ENCODE measurements at regions of chr3 and their contacts with region 1.

Region 1: DNA sequence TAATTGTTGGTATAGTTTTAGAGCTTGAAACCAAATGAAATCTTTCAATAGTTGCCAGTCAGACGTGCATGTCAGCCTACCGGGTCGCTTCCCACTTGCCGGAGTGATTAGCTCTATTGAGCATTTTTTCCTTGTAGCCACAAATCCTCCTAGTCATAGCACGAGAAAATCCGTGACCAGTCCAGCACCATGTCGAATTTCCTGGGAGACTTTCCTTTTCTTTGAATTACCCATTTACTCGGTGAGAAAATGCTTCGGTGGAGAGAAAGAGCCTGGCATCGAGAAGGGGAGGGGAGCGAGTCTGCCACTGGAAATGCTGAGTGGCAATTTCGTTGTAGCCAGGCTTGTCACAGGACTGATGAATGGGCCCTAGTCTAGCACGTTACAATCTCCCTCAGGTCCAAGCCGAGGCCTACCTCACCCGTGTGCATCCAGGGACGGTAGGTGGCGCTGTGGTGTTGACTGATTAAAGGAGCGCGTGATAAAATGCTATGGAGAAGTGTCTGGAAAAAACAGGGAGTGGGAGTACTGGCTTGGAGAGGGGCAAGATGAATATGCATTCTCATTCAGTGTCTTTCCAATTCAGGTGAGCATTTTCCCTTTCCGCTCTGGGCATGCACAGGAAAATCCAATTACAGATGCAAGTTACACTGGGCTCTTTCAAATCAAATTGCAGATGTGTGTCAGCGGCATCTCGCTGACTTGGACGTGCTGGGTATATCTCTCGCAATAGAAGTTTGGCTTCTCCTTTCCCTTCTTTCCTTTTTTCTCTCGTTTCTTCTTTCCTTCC is 238.8 kb downstream of the EDEM1 start:
- DNase-seq: peak; percentile 86
- H3K4me3 Mint-ChIP-seq: no peak overlapping the region
- H3K27ac Mint-ChIP-seq: no peak overlapping the region
- H3K4me1 Mint-ChIP-seq: peaks cover 9% of the 10 kb centered on the region
- H3K27me3 Mint-ChIP-seq: no peaks in the 10 kb centered on the region
- CTCF ChIP-seq: peak; percentile 84

Region 2: GRCh38 chr3:5226783-5227182 is 199.5 kb before region 1 on chr3:
- CTCF ChIA-PET with region 1: no interaction called
- intact Hi-C with region 1: loop called (anchors 10 kb)
- DNase-seq: no peak
- H3K4me3 Mint-ChIP-seq: no peak overlapping the region
- H3K27ac Mint-ChIP-seq: no peak overlapping the region
- H3K4me1 Mint-ChIP-seq: no peaks in the 10 kb centered on the region
- H3K27me3 Mint-ChIP-seq: no peaks in the 10 kb centered on the region
- CTCF ChIP-seq: peak; percentile 27

Region 3: DNA sequence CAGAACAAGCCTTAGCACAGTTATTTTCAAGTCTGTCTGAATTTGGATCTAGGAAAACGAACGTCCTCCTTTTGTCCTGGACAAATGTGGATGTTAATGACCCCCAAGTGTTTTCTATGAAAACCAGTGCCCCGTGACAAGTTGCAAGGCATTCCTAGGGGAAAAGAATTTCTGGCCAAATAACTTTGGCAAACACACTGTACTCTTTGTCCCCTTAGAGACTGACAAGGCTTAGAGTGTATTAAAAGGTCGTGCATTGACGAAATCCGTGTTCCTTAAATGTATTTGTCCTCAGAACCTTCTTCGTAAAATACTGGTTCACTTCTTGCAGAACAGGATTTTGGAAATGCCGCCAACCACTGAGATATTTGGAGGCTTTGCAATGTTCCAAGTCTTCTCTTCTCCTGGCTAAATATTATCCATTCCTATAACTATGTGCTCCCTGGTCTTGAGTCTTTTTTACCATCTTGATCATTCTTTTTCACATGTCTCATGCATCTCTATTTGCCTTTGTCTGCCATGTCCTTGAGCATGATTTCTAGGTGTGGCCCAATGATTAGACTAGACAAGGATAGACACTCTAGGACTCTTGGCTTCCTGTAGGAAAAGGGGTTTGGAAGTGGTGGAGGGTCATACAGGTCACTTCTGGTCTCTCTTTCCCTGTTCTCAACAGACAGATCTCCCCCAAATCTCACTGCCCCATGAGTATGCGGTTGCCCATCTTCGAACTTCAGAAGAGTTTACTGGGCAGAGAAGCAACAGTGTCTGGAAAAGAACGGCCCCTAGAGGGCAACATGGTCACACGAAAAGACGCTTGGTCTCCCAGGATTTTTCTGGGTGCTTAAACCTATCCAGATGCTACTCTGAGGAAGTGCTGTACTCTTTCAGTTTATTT is 121.3 kb before region 1 on chr3:
- CTCF ChIA-PET with region 1: no interaction called
- intact Hi-C with region 1: loop called (anchors 1 kb)
- DNase-seq: peak; percentile 74
- H3K4me3 Mint-ChIP-seq: no peak overlapping the region
- H3K27ac Mint-ChIP-seq: no peak overlapping the region
- H3K4me1 Mint-ChIP-seq: peaks cover 31% of the 10 kb centered on the region
- H3K27me3 Mint-ChIP-seq: no peaks in the 10 kb centered on the region
- CTCF ChIP-seq: peak; percentile 50

Region 4: DNA sequence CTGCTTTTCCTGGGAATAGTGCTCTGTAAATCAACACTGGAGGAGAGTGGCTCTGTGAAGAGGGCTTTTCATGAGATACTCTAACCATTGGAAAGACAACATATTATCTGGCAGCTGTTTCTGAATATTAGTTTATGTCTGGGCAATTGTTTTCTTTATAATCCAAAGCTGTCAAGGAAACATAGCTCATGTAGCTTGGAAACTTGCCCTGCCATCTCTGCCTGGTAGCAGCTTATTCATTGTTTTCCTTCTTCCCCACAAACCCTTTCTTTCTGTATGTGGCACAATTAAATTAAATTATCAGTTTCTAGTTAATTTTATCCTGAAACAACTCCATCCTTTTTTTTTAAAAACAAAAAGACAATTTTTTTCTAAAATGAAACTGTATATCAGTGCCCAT is 78.8 kb before region 1 on chr3:
- CTCF ChIA-PET with region 1: no interaction called
- intact Hi-C with region 1: no loop called
- DNase-seq: no peak
- H3K4me3 Mint-ChIP-seq: no peak overlapping the region
- H3K27ac Mint-ChIP-seq: no peak overlapping the region
- H3K4me1 Mint-ChIP-seq: no peaks in the 10 kb centered on the region
- H3K27me3 Mint-ChIP-seq: no peaks in the 10 kb centered on the region
- CTCF ChIP-seq: no peak

Region 5: GRCh38 chr3:5389057-5389456 is 37.2 kb before region 1 on chr3:
- CTCF ChIA-PET with region 1: no interaction called
- intact Hi-C with region 1: loop called (anchors 5 kb)
- DNase-seq: peak; percentile 78
- H3K4me3 Mint-ChIP-seq: peak overlapping the region; percentile 24
- H3K27ac Mint-ChIP-seq: peak overlapping the region; percentile 96
- H3K4me1 Mint-ChIP-seq: peaks cover 43% of the 10 kb centered on the region
- H3K27me3 Mint-ChIP-seq: no peaks in the 10 kb centered on the region
- CTCF ChIP-seq: no peak

Region 6: DNA sequence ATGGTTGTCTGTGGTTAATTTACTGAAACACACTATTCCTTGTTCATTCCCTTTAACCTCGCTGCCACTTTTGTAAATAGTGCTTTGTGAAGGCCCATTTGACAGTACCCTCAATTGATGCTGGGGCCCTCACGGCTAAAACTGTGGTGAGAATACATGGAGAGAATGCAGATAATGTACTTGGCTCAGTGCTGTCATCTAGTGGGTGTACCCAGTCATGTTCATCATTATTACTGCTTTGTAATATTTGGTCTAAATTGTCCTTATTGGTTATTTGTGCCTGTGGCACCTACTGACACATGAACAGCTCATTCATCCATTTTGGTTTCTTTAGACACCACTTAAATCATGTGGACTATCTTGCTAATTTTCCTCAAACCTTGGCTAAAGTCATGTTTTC is 304.8 kb after region 1 on chr3:
- CTCF ChIA-PET with region 1: interaction called, 3 read pairs
- intact Hi-C with region 1: loop called (anchors 1 kb)
- DNase-seq: no peak
- H3K4me3 Mint-ChIP-seq: no peak overlapping the region
- H3K27ac Mint-ChIP-seq: no peak overlapping the region
- H3K4me1 Mint-ChIP-seq: peaks cover 8% of the 10 kb centered on the region
- H3K27me3 Mint-ChIP-seq: no peaks in the 10 kb centered on the region
- CTCF ChIP-seq: no peak

Region 7: DNA sequence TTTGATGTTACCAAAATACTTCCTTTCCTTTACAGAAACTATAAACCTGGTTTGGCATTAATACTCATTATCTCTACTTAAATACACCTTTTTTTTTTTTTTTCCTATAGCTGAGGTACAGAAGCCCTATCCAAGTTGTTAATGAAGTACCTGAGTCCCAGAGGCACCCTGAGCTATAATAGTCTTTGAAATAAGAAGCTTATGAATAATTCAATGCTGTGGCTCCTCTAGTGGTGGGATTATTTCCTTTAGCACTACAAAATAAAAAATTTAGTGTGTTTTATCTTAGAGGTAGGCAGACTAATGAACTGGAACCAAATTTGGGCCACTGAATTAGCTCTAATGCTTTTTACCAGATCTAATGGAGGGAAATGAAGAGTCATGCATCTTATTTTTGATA is 373.1 kb after region 1 on chr3:
- CTCF ChIA-PET with region 1: no interaction called
- intact Hi-C with region 1: loop called (anchors 1 kb)
- DNase-seq: no peak
- H3K4me3 Mint-ChIP-seq: no peak overlapping the region
- H3K27ac Mint-ChIP-seq: peak overlapping the region; percentile 76
- H3K4me1 Mint-ChIP-seq: no peaks in the 10 kb centered on the region
- H3K27me3 Mint-ChIP-seq: no peaks in the 10 kb centered on the region
- CTCF ChIP-seq: no peak